Posterior vena cava (tissue), 2 donors: ENCODE measurements at regions of chr7 and their contacts with region 1.

Region 1: DNA sequence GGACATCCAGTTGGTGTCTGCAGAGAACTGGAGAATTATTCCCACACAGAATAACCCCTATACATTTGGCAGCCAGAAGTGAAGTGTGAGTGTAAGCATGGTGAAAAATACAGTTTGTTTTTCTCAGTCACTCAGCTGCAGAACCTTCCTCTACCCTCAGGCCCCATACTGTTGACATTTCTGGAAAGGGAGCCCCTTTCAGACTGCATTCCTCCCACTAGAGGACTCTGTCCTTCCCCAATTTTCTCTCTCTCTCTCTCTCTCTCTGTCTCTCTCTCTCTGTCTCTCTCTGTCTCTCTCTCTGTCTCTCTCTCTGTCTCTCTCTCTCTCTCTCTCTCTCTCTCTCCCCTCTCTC is 86.8 kb upstream of the STEAP1B start:
- DNase-seq: no peak

Region 2: GRCh38 chr7:22718200-22718711 is 131.5 kb after region 1 on chr7:
- intact Hi-C with region 1: loop called in 1 of 2 experiments (anchors 10 kb)
- DNase-seq: no peak